Common myeloid progenitor, CD34-positive (primary cell): ENCODE measurements at regions of chr18 and their contacts with region 1.

Region 1: DNA sequence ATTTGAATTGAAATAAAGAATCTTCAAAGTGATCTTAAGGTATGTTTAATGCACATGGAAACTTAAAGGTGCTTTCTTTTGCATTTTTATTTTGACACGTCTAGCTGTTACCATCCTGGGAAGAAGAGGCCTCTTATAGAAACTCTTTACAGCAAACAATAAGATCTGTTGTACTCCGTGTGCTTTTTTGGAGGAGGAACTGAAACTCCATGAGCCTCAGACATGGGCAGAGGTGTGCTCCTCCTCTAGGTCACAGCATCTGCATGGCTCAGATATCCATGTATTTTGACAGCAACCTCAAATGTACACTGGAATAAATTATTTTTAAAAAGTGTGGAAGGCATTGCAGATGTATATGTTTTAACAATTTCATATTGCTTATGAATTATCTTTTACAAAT is 783.3 kb upstream of the SALL3 start:
- DNase-seq: no peak
- H3K4me3 ChIP-seq: no peak overlapping the region
- H3K27ac ChIP-seq: no peak overlapping the region
- H3K4me1 ChIP-seq: no peaks in the 10 kb centered on the region
- H3K27me3 ChIP-seq: no peaks in the 10 kb centered on the region

Region 2: GRCh38 chr18:77777163-77777562 is 419.1 kb before region 1 on chr18:
- CTCF ChIA-PET with region 1: no interaction called
- POLR2A ChIA-PET with region 1: interaction called, 10 read pairs
- DNase-seq: no peak
- H3K4me3 ChIP-seq: no peak overlapping the region
- H3K27ac ChIP-seq: no peak overlapping the region
- H3K4me1 ChIP-seq: no peaks in the 10 kb centered on the region
- H3K27me3 ChIP-seq: peaks cover 0 to 4% (median 0%) of the 10 kb centered on the region in 5 experiments